ENCODE measurements at regions of chr21 and their contacts with region 1.

Region 1: GRCh38 chr21:17454315-17455027 is 58.4 kb upstream of the CXADR start:
- DNase-seq: peak; percentile 34 to 92 (median 80)

Region 2: GRCh38 chr21:17387030-17387617 is 67.3 kb before region 1 on chr21:
- intact Hi-C with region 1: no loop called
- DNase-seq: peak in 27 of 42 donors; percentile 14 to 87 (median 62)

Region 3: DNA sequence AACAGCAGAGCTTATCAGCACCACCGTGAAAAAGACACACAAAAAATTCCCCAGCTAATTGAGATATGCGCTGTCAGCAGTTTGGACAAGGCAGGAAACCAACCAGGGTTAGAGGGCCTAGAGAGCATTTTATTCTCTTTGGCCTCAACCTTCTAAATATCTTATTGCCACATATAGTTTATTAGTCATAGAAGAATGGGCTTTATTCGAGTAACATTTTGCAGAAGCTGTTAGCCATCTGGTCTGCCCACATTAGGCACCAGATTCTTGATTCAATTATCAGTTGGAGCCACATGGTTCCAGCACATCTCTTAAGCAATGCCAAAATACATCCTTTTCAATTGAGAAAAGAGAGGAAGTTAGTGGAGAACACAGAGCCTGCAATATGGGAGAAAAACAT is 51.5 kb before region 1 on chr21:
- intact Hi-C with region 1: loop called (anchors 5 kb)
- DNase-seq: peak in 1 of 42 donors; percentile 20

Region 4: DNA sequence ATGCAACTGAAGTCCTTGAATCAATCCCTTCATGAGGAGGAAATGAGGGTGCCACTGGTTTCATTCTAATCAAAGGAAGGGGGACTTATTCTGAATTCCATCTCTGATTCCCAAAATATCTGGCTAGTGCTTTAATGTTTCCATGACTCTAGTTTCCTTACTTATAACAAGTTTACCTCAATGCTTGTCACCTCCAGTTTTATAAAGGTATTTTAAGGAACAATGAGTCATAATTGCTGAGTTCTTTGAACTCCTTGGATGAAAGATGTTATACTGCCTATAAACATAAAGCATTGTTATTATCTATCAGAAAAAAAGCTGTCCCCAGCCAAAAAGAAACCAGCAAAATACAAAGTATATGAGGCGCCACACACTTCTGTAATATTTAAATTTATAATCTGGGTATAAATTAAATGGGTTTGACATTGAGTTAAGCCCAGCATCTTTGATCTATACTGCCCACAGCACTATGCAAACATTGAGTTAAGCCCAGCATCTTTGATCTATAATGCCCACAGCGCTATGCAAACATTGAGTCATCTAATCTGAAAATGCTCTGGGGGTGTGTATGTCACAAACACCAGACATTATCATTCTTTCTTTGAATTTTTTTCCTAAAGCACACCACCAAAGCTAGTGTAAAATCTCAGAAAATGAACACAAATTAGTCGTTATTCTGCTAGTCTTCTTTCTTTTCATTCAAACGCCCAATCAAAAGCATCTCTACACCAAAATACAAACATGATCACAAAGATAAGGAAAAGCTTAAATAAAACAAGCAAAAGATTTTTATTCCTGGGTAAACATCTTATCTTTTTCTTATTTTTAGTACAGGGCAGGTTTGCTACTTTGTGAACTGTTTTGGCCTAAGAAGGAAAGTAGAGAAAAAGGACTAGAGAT is 46.9 kb after region 1 on chr21:
- intact Hi-C with region 1: no loop called
- DNase-seq: no peak

Measured in head of caudate nucleus (tissue), 42 donors.